ENCODE measurements at regions of chr16 and their contacts with region 1.

Region 1: GRCh38 chr16:48347191-48347865 is 37.9 kb downstream of the SIAH1 start:
- DNase-seq: no peak
- H3K4me3 ChIP-seq: no peak overlapping the region
- H3K27ac ChIP-seq: no peak overlapping the region
- H3K4me1 ChIP-seq: no peaks in the 10 kb centered on the region
- H3K27me3 ChIP-seq: no peaks in the 10 kb centered on the region
- CTCF ChIP-seq: no peak
- EP300 ChIP-seq: no peak
- POLR2A ChIP-seq: no peak

Region 2: GRCh38 chr16:48526058-48526957 is 179.0 kb after region 1 on chr16:
- in situ Hi-C with region 1: loop called (anchors 10 to 25 kb)
- intact Hi-C with region 1: no loop called
- DNase-seq: peak; percentile 81
- H3K4me3 ChIP-seq: no peak overlapping the region
- H3K27ac ChIP-seq: no peak overlapping the region
- H3K4me1 ChIP-seq: peaks cover 0 to 9% (median 3%) of the 10 kb centered on the region in 4 donors
- H3K27me3 ChIP-seq: no peaks in the 10 kb centered on the region
- CTCF ChIP-seq: peak in 4 of 5 experiments; percentile 42 to 87 (median 58)
- EP300 ChIP-seq: no peak
- POLR2A ChIP-seq: no peak

Region 3: DNA sequence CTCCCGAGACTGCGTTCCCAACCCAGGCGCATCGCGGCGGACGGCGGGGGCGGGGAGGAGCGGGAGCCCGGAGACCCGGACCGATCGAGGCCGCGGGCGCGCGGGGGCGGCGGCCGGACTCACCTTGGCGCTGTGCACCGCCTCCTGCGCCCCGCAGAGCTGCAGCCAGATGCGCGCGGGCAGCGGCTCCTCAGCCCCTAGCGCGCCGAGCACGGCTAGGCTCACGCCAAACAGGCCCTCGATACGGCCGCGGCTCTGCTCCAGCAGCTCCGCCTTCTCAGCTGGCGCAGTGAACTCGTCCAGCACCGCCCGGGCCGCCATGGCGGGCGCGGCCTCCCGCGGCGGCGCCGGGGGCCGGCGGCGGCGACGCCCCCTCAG is 262.3 kb after region 1 on chr16:
- in situ Hi-C with region 1: no loop called
- intact Hi-C with region 1: no loop called
- DNase-seq: peak; percentile 61
- H3K4me3 ChIP-seq: peak overlapping the region; percentile 72 to 98 (median 96)
- H3K27ac ChIP-seq: peak overlapping the region; percentile 95 to 97 (median 96)
- H3K4me1 ChIP-seq: peaks cover 28 to 76% (median 59%) of the 10 kb centered on the region in 4 donors
- H3K27me3 ChIP-seq: no peaks in the 10 kb centered on the region
- CTCF ChIP-seq: no peak
- EP300 ChIP-seq: no peak
- POLR2A ChIP-seq: peak; percentile 4